ENCODE measurements at regions of chr18 and their contacts with region 1.

Region 1: GRCh38 chr18:49668574-49669275 is 106.9 kb downstream of the LIPG start:
- DNase-seq: peak; percentile 56 to 72
- ATAC-seq: peak; percentile 84 to 92 (median 88)
- H3K4me3 ChIP-seq: no peak overlapping the region
- H3K27ac ChIP-seq: peak overlapping the region in 9 of 10 donors; percentile 39 to 78 (median 69)
- H3K4me1 ChIP-seq: peaks cover 0 to 54% (median 20%) of the 10 kb centered on the region in 9 donors
- H3K27me3 ChIP-seq: peaks cover 0 to 48% (median 23%) of the 10 kb centered on the region in 7 donors
- CTCF ChIP-seq: no peak

Region 2: DNA sequence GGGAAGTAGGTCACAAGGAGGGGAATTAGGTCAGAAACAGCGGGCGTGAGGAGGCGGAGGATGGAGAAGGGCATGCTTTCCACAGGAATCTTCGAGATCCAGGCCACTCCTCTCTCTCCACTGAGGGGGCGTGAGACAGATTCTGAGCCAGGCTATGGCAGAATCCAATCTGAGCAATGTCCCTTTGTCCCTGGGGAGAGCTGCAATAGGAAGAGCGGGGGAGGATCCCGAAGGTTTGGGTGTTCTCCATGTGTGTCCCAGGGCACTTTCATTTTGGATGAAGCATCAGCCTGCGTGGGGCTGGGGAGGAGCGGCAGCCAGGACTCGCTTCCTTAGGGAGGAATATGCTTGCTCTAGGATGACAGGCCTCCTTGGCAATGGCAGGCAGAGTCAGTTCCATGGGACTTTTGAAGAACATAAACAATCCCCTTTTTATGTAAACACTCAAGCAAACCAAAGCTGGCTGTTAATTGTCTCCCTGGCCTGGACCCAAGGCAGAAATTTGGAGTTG is 22.8 kb before region 1 on chr18:
- intact Hi-C with region 1: loop called in 1 of 10 experiments (anchors 2 kb)
- DNase-seq: peak; percentile 65 to 77
- ATAC-seq: peak; percentile 85 to 90 (median 87)
- H3K4me3 ChIP-seq: no peak overlapping the region
- H3K27ac ChIP-seq: peak overlapping the region in 4 of 10 donors; percentile 1 to 50 (median 48)
- H3K4me1 ChIP-seq: peaks cover 0 to 34% (median 8%) of the 10 kb centered on the region in 9 donors
- H3K27me3 ChIP-seq: peaks cover 0 to 9% (median 0%) of the 10 kb centered on the region in 7 donors
- CTCF ChIP-seq: no peak

Region 3: GRCh38 chr18:49716035-49716434 is 47.3 kb after region 1 on chr18:
- intact Hi-C with region 1: no loop called
- DNase-seq: no peak
- ATAC-seq: no peak
- H3K4me3 ChIP-seq: no peak overlapping the region
- H3K27ac ChIP-seq: no peak overlapping the region
- H3K4me1 ChIP-seq: no peaks in the 10 kb centered on the region
- H3K27me3 ChIP-seq: peaks cover 0 to 14% (median 9%) of the 10 kb centered on the region in 7 donors
- CTCF ChIP-seq: no peak

Region 4: DNA sequence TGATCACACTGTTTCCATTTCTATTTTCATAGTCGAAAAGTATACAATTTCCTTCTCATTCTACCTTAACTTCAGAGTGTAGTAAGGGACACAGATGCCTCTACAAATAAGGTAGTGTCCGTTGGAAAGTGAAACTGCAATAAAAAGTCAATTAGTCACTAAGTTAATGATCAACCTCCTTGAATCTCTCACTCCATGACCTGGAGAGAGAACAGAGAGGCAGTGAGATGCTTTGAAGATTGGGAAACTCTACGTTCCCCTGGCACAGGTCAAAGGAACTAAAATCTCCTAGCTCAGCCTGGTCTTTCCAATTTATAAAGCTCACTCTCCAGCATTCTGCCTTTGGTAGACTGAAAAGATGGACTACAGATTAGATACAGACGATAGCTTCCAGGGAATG is 298.4 kb after region 1 on chr18:
- intact Hi-C with region 1: no loop called
- DNase-seq: no peak
- ATAC-seq: no peak
- H3K4me3 ChIP-seq: no peak overlapping the region
- H3K27ac ChIP-seq: no peak overlapping the region
- H3K4me1 ChIP-seq: no peaks in the 10 kb centered on the region
- H3K27me3 ChIP-seq: peaks cover 0 to 10% (median 0%) of the 10 kb centered on the region in 7 donors
- CTCF ChIP-seq: no peak

Region 5: GRCh38 chr18:50013363-50014138 is 344.8 kb after region 1 on chr18:
- intact Hi-C with region 1: no loop called
- DNase-seq: no peak
- ATAC-seq: no peak
- H3K4me3 ChIP-seq: no peak overlapping the region
- H3K27ac ChIP-seq: no peak overlapping the region
- H3K4me1 ChIP-seq: no peaks in the 10 kb centered on the region
- H3K27me3 ChIP-seq: peaks cover 0 to 13% (median 9%) of the 10 kb centered on the region in 7 donors
- CTCF ChIP-seq: no peak

Measured in heart right ventricle (tissue), 16 donors.